Activated CD4-positive, alpha-beta memory T cell treated with anti-CD3 and anti-CD28 coated beads, Interleukin-2, amount 10 ng/mL, durations not matched to agents 7 days and 5 days (primary cell): ENCODE measurements at regions of chr15 and their contacts with region 1.

Region 1: GRCh38 chr15:68277603-68278344 is at the start of gene FEM1B:
- DNase-seq: peak; percentile 89
- H3K4me3 Mint-ChIP-seq: peak within 1 kb of the TSS; percentile 99
- H3K27ac Mint-ChIP-seq: peak within 1 kb of the TSS; percentile 95
- H3K4me1 Mint-ChIP-seq: peaks cover 47% of the 10 kb centered on the region
- H3K27me3 Mint-ChIP-seq: no peaks in the 10 kb centered on the region
- total RNA-seq, gene FEM1B: 46.9 to 48.8 TPM

Region 2: DNA sequence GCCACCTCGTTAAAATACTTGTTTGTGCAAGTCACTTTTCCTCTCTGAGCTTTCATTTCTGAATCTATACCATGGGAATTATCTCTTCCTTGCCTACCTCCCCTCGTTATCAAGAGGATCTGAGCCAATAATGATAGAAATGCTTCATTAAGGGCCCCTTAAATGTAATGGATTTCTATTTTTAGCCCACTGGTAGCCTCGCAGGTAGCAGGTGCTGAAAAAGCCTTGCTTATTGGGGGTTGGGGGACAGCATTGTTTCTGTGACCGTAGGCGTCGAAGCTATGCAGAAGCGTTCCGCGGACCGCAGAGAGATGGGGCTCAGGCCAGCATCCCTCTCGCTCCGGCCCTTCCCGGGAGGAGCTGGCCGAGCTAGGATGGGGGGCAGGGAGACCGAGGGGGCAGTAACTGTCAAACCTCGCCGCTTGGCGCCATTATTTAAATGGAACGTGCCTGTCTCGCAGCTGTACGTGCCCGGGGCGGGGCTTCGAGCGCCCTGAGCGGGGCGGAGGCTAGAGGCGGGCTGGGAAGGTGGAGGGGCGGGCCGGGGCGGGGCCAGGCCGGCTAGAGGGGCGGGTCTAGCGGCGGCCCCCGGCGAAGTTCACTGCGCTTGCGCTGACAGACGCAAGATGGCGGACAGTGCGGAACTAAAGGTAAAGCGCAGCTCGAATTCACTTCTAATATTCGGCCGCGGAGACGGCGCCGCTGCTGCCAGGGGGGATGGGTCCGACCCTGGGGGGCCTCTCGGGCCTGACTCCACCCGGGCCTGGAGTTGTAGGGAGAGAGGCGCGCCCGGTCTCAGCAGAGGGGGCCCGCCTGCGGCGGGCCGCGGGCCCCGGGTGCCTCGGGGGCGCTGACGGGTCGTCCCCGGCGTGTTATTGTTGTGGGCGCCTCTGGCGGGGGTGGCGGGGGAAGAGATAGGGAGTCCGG is 223.8 kb before region 1 on chr15 and contains the start of gene PIAS1:
- CTCF ChIA-PET with region 1: interaction called, 3 read pairs
- POLR2A ChIA-PET with region 1: interaction called, 30 read pairs
- DNase-seq: peak; percentile 95
- H3K4me3 Mint-ChIP-seq: peak within 1 kb of the TSS; percentile 93
- H3K27ac Mint-ChIP-seq: peak within 1 kb of the TSS; percentile 85
- H3K4me1 Mint-ChIP-seq: peaks cover 51% of the 10 kb centered on the region
- H3K27me3 Mint-ChIP-seq: peaks cover 8% of the 10 kb centered on the region
- total RNA-seq, gene PIAS1: 39.1 to 43.4 TPM

Region 3: GRCh38 chr15:68252925-68253534 is 24.7 kb before region 1 on chr15:
- CTCF ChIA-PET with region 1: interaction called, 8 read pairs
- POLR2A ChIA-PET with region 1: interaction called, 12 read pairs
- DNase-seq: peak; percentile 38
- H3K4me3 Mint-ChIP-seq: no peak overlapping the region
- H3K27ac Mint-ChIP-seq: no peak overlapping the region
- H3K4me1 Mint-ChIP-seq: peaks cover 5% of the 10 kb centered on the region
- H3K27me3 Mint-ChIP-seq: peaks cover 22% of the 10 kb centered on the region

Region 4: GRCh38 chr15:68298882-68299381 is 21.2 kb after region 1 on chr15:
- CTCF ChIA-PET with region 1: interaction called, 3 read pairs
- POLR2A ChIA-PET with region 1: interaction called, 55 read pairs
- DNase-seq: no peak
- H3K4me3 Mint-ChIP-seq: peak overlapping the region; percentile 64
- H3K27ac Mint-ChIP-seq: peak overlapping the region; percentile 70
- H3K4me1 Mint-ChIP-seq: peaks cover 19% of the 10 kb centered on the region
- H3K27me3 Mint-ChIP-seq: no peaks in the 10 kb centered on the region

Region 5: DNA sequence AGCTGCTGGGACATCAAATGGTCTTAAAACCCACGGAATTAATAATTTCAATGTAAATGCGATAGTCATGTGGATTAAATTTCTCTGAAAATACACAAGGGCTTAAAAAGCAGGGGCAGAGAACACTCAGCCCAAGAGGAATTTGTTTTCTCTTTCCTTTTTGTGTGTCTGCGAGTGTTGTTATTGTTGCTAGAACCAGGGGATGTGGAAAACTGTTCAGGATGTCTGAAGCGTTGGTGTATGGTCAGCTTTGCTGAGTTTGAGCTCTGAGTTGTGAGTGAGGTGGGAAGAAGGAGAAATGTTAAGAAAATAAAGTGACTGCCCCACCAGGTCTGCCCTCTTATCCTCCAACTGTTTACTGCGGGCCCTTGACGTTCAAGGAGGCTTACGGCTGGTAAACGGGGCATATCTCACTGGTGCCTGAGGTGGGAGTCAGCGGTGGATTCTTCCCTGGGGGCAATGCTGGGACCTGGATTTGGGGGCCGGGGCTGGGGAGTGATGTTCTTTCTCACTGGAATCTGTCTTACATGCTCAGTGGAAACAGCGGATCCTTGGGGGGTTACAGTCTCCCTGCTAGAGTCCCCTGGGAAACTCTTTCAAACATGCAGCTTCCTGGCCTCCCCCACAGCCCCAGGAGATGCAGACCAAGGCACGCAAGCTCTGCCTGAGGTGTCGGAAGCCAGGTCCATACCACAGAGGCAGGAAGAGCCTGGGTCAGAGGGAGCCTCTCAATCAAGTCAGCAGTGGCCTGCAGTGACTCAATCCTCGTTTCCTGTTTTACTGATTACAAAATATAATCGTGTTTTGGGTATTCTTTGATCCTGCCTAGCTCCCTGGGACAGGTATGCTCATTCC is 112.4 kb after region 1 on chr15:
- CTCF ChIA-PET with region 1: no interaction called
- POLR2A ChIA-PET with region 1: interaction called, 12 read pairs
- DNase-seq: peak; percentile 68
- H3K4me3 Mint-ChIP-seq: no peak overlapping the region
- H3K27ac Mint-ChIP-seq: peak overlapping the region; percentile 51
- H3K4me1 Mint-ChIP-seq: peaks cover 25% of the 10 kb centered on the region
- H3K27me3 Mint-ChIP-seq: peaks cover 27% of the 10 kb centered on the region